CD8-positive, alpha-beta memory T cell (primary cell): ENCODE measurements at regions of chr17 and their contacts with region 1.

Region 1: DNA sequence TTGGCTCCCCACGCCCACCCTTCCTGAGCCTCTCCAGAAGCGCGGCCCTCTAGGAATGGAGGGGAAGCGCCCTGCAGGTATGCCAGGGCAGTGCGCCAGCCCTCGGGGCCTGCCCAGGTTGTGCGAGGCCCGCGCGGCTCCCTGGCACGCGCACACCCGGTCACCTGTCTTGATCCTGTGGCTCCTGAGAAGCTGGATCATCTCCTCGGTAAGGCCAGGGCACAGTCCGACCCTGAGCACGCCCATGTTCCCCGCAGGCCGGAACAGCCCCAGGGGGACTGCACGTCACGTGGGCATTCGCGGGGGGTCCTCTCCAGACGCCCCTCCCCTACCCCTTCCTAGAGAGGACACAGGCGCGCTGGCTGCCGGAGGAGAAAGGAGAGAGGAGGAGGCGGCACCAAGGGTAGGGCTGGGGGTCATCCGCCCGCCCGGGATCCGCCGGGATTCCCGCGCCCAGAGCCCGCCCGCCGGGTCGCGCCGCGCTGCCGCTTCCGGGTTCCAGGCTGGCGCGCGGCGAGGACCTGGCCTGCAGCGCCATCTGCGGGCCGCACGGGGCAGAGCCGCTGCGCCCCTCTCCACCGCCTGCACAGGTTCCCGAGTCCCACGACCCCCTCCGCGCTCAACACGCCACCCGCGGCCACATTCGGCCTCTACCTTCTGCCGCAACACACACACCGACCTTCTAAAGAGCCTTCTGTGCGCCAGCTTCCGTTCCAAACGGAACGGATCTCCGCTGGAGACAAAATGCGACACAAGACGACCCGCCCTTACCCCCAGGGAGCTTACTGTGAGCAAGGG is at the start of gene RAD51D:
- DNase-seq: peak; percentile 71 to 84 (median 79)
- H3K4me3 ChIP-seq: peak within 1 kb of the TSS; percentile 83
- H3K4me3 Mint-ChIP-seq: peak within 1 kb of the TSS; percentile 91 to 96 (median 95)
- H3K27ac ChIP-seq: peak within 1 kb of the TSS; percentile 80
- H3K27ac Mint-ChIP-seq: peak within 1 kb of the TSS; percentile 51 to 99 (median 94)
- H3K4me1 ChIP-seq: peaks cover 22% of the 10 kb centered on the region
- H3K4me1 Mint-ChIP-seq: peaks cover 29 to 43% (median 41%) of the 10 kb centered on the region in 3 donors
- H3K27me3 ChIP-seq: no peaks in the 10 kb centered on the region
- H3K27me3 Mint-ChIP-seq: peaks cover 0 to 2% of the 10 kb centered on the region in 2 donors
- total RNA-seq, gene RAD51D: 27.5 to 29.8 TPM

Region 2: GRCh38 chr17:34542700-34543336 is 576.7 kb before region 1 on chr17:
- CTCF ChIA-PET with region 1: interaction called, 36 read pairs
- POLR2A ChIA-PET with region 1: no interaction called
- DNase-seq: peak; percentile 34 to 63 (median 40)
- H3K4me3 ChIP-seq: no peak overlapping the region
- H3K4me3 Mint-ChIP-seq: no peak overlapping the region
- H3K27ac ChIP-seq: no peak overlapping the region
- H3K27ac Mint-ChIP-seq: peak overlapping the region in 1 of 8 donors; percentile 57
- H3K4me1 ChIP-seq: no peaks in the 10 kb centered on the region
- H3K4me1 Mint-ChIP-seq: no peaks in the 10 kb centered on the region
- H3K27me3 ChIP-seq: no peaks in the 10 kb centered on the region
- H3K27me3 Mint-ChIP-seq: peaks cover 23 to 60% of the 10 kb centered on the region in 2 donors

Region 3: DNA sequence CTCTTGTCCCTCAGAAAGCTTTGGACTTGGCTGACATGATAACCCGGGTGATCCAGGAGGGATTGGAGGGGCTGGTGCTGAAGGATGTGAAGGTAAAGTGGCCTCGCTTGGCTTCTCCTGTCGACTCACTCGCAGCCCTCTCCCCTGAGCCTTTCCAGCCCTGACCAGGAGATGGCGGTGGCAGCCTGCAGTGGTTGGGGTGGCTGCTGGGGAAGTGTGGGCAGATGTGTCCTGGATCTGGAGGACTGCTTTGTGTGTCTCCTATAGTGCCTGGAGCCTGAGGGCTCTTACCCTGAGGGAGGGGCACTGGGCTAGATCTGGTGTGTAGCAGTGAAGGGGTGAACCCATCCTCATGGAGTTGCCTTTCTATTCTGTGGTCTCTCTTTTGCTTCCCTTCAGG is 121.4 kb before region 1 on chr17:
- CTCF ChIA-PET with region 1: interaction called, 93 read pairs
- POLR2A ChIA-PET with region 1: no interaction called
- DNase-seq: peak; percentile 62 to 83 (median 68)
- H3K4me3 ChIP-seq: no peak overlapping the region
- H3K4me3 Mint-ChIP-seq: no peak overlapping the region
- H3K27ac ChIP-seq: no peak overlapping the region
- H3K27ac Mint-ChIP-seq: peak overlapping the region; percentile 10 to 82 (median 70)
- H3K4me1 ChIP-seq: no peaks in the 10 kb centered on the region
- H3K4me1 Mint-ChIP-seq: peaks cover 5 to 10% (median 8%) of the 10 kb centered on the region in 3 donors
- H3K27me3 ChIP-seq: no peaks in the 10 kb centered on the region
- H3K27me3 Mint-ChIP-seq: no peaks in the 10 kb centered on the region

Region 4: GRCh38 chr17:35063514-35064223 is 55.9 kb before region 1 on chr17 and contains the start of gene RFFL:
- CTCF ChIA-PET with region 1: interaction called, 18 read pairs
- POLR2A ChIA-PET with region 1: interaction called, 8 read pairs
- DNase-seq: peak; percentile 75 to 93 (median 80)
- H3K4me3 ChIP-seq: peak within 1 kb of the TSS; percentile 38
- H3K4me3 Mint-ChIP-seq: peak within 1 kb of the TSS; percentile 72 to 92 (median 80)
- H3K27ac ChIP-seq: peak within 1 kb of the TSS; percentile 57
- H3K27ac Mint-ChIP-seq: peak within 1 kb of the TSS; percentile 88 to 97 (median 94)
- H3K4me1 ChIP-seq: peaks cover 41% of the 10 kb centered on the region
- H3K4me1 Mint-ChIP-seq: peaks cover 46 to 77% (median 73%) of the 10 kb centered on the region in 3 donors
- H3K27me3 ChIP-seq: no peaks in the 10 kb centered on the region
- H3K27me3 Mint-ChIP-seq: no peaks in the 10 kb centered on the region
- total RNA-seq, gene RFFL: 30.2 to 33.1 TPM

Region 5: DNA sequence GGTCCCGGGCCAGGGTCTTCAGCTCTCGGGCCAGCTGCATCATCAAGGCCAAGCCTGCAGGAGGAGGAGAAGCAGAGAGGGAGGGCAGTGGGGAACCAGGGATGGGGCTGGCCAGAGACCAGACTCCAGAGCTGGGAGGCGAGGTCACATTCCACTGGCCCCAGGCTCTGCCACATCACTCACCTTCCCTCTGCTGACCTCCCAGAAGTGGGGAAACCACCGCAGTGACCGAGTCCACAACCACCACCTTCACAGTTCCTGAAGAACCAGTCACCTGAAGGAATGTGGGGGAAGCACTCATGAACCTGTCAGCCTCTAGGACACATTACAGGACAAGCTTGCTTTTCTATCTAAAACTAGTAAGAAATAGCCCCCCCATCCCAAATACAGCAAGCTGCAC is 16.3 kb before region 1 on chr17:
- CTCF ChIA-PET with region 1: interaction called, 13 read pairs
- POLR2A ChIA-PET with region 1: no interaction called
- DNase-seq: no peak
- H3K4me3 ChIP-seq: no peak overlapping the region
- H3K4me3 Mint-ChIP-seq: no peak overlapping the region
- H3K27ac ChIP-seq: no peak overlapping the region
- H3K27ac Mint-ChIP-seq: peak overlapping the region in 1 of 8 donors; percentile 38
- H3K4me1 ChIP-seq: no peaks in the 10 kb centered on the region
- H3K4me1 Mint-ChIP-seq: peaks cover 2 to 4% (median 4%) of the 10 kb centered on the region in 3 donors
- H3K27me3 ChIP-seq: no peaks in the 10 kb centered on the region
- H3K27me3 Mint-ChIP-seq: no peaks in the 10 kb centered on the region

Region 6: GRCh38 chr17:35152421-35153140 is 33.0 kb after region 1 on chr17:
- CTCF ChIA-PET with region 1: no interaction called
- POLR2A ChIA-PET with region 1: no interaction called
- DNase-seq: no peak
- H3K4me3 ChIP-seq: no peak overlapping the region
- H3K4me3 Mint-ChIP-seq: no peak overlapping the region
- H3K27ac ChIP-seq: no peak overlapping the region
- H3K27ac Mint-ChIP-seq: no peak overlapping the region
- H3K4me1 ChIP-seq: no peaks in the 10 kb centered on the region
- H3K4me1 Mint-ChIP-seq: no peaks in the 10 kb centered on the region
- H3K27me3 ChIP-seq: no peaks in the 10 kb centered on the region
- H3K27me3 Mint-ChIP-seq: no peaks in the 10 kb centered on the region

Region 7: DNA sequence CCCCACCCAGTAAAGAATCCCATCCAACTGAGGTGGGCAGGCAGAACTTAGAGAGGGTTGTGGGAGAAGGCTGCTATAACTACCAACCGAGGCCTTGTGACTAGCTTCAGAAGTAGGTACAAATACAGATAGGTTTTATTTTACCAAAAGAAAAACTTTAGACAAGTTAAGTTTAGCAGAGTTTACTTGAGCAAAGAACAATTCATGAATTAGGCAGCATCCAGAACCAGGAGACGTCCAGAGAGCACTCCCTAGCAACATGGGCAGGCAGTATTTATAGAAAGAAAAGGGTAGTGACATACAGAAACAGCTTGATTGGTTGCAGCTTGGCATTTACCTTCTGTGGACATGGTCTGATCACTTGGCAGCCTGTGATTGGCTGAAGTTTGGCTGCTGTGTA is 165.4 kb after region 1 on chr17:
- CTCF ChIA-PET with region 1: no interaction called
- POLR2A ChIA-PET with region 1: no interaction called
- DNase-seq: no peak
- H3K4me3 ChIP-seq: no peak overlapping the region
- H3K4me3 Mint-ChIP-seq: no peak overlapping the region
- H3K27ac ChIP-seq: no peak overlapping the region
- H3K27ac Mint-ChIP-seq: peak overlapping the region in 2 of 8 donors; percentile 29 to 40
- H3K4me1 ChIP-seq: peaks cover 24% of the 10 kb centered on the region
- H3K4me1 Mint-ChIP-seq: peaks cover 27 to 44% (median 43%) of the 10 kb centered on the region in 3 donors
- H3K27me3 ChIP-seq: no peaks in the 10 kb centered on the region
- H3K27me3 Mint-ChIP-seq: no peaks in the 10 kb centered on the region